Activated CD4-positive, alpha-beta memory T cell treated with anti-CD3 and anti-CD28 coated beads, Interleukin-2, amount 10 ng/mL, durations not matched to agents 7 days and 5 days (primary cell): ENCODE measurements at regions of chrX and their contacts with region 1.

Region 1: DNA sequence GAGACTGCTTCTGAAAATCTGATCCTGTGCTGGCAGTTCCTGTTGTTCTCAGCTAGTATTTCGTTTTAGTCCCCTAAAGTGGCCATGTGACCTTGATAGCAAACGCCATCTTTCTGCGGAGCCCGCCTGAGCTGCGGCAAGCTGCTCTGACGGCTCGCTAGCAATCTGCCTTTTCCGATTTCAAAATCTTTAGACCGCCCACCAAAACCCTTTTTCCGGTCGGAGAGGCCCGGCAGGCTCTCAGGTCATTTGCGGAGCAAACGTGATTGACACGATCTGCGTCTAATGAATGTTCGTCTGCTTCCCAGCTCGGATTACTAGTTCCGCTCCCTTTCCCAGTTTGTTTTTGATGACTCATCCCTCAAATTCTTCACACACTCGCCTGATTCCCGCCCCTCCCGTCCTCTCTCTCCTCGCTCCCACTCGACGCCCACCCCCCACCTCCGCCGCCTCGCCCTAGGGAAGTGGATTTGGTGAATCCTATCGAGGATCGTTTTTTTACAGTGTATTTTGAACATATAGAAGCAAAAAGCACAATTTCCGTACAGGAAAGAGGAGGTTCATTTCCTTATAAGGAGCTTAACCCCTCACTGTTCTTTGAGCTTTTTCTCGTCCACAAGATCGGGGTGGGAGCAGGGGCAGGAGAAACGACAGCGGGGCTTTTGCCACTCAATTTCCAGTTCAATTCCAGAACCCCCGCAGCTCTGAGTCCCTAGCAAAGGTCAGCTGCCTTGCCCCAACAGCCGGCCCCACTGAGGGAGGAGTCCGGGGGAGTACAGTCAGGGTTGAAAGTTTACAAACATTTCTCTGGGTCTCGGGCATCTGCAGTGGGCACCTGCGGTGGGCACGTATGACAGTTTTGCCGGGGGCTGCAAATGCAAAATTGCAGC is 37.5 kb downstream of the NLGN3 start:
- DNase-seq: peak; percentile 86
- H3K4me3 Mint-ChIP-seq: peak overlapping the region; percentile 85
- H3K27ac Mint-ChIP-seq: peak overlapping the region; percentile 97
- H3K4me1 Mint-ChIP-seq: peaks cover 29% of the 10 kb centered on the region
- H3K27me3 Mint-ChIP-seq: no peaks in the 10 kb centered on the region

Region 2: GRCh38 chrX:71111141-71111843 is 70.9 kb before region 1 on chrX and contains the start of gene IL2RG:
- CTCF ChIA-PET with region 1: interaction called, 4 read pairs
- POLR2A ChIA-PET with region 1: interaction called, 35 read pairs
- DNase-seq: peak; percentile 83
- H3K4me3 Mint-ChIP-seq: peak within 1 kb of the TSS; percentile 98
- H3K27ac Mint-ChIP-seq: peak within 1 kb of the TSS; percentile 99
- H3K4me1 Mint-ChIP-seq: peaks cover 39% of the 10 kb centered on the region
- H3K27me3 Mint-ChIP-seq: no peaks in the 10 kb centered on the region
- total RNA-seq, gene IL2RG: 633 to 637 TPM

Region 3: GRCh38 chrX:71118032-71118984 is 63.8 kb before region 1 on chrX and contains the start of gene MED12:
- CTCF ChIA-PET with region 1: interaction called, 3 read pairs
- POLR2A ChIA-PET with region 1: interaction called, 35 read pairs
- DNase-seq: peak; percentile 84
- H3K4me3 Mint-ChIP-seq: peak within 1 kb of the TSS; percentile 77
- H3K27ac Mint-ChIP-seq: peak within 1 kb of the TSS; percentile 78
- H3K4me1 Mint-ChIP-seq: peaks cover 28% of the 10 kb centered on the region
- H3K27me3 Mint-ChIP-seq: no peaks in the 10 kb centered on the region
- total RNA-seq, gene MED12: 56.5 to 61.3 TPM

Region 4: GRCh38 chrX:71144651-71145050 is 37.5 kb before region 1 on chrX and contains the start of gene NLGN3:
- CTCF ChIA-PET with region 1: no interaction called
- POLR2A ChIA-PET with region 1: no interaction called
- DNase-seq: no peak
- H3K4me3 Mint-ChIP-seq: no peak within 1 kb of the TSS
- H3K27ac Mint-ChIP-seq: no peak within 1 kb of the TSS
- H3K4me1 Mint-ChIP-seq: peaks cover 8% of the 10 kb centered on the region
- H3K27me3 Mint-ChIP-seq: no peaks in the 10 kb centered on the region
- total RNA-seq, gene NLGN3: 0.90 to 1.2 TPM

Region 5: DNA sequence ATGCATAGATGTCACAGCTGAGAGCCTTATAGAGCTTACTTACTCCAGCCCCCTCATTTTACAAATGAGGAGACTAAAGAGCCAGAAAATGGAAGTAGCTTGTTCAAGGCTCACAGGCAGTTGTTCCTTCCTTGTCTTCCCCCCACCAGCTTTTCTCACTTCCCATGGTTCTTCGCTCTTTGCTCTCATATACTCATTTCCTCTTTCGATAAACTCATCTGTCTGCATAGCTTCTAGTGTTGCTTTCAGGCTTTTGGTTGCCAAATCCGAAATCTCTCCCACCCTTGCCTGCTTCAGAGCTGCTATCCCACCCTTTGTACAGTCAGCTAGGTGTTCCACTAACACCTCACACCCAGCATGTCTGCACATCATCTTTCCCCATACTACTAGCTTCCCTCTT is 15.9 kb after region 1 on chrX:
- CTCF ChIA-PET with region 1: interaction called, 14 read pairs
- POLR2A ChIA-PET with region 1: interaction called, 66 read pairs
- DNase-seq: peak; percentile 17
- H3K4me3 Mint-ChIP-seq: peak overlapping the region; percentile 94
- H3K27ac Mint-ChIP-seq: peak overlapping the region; percentile 89
- H3K4me1 Mint-ChIP-seq: peaks cover 25% of the 10 kb centered on the region
- H3K27me3 Mint-ChIP-seq: no peaks in the 10 kb centered on the region

Region 6: GRCh38 chrX:71283403-71284143 is 101.4 kb after region 1 on chrX and contains the start of gene NONO:
- CTCF ChIA-PET with region 1: interaction called, 11 read pairs
- POLR2A ChIA-PET with region 1: interaction called, 33 read pairs
- DNase-seq: peak; percentile 86
- H3K4me3 Mint-ChIP-seq: peak within 1 kb of the TSS; percentile 97
- H3K27ac Mint-ChIP-seq: peak within 1 kb of the TSS; percentile 99
- H3K4me1 Mint-ChIP-seq: peaks cover 16% of the 10 kb centered on the region
- H3K27me3 Mint-ChIP-seq: peaks cover 4% of the 10 kb centered on the region
- total RNA-seq, gene NONO: 376 to 400 TPM